ENCODE measurements at regions of chr2 and their contacts with region 1.

Region 1: GRCh38 chr2:190880378-190881073 is at the start of gene GLS:
- DNase-seq: peak; percentile 98
- H3K4me3 Mint-ChIP-seq: peak within 1 kb of the TSS; percentile 96
- H3K27ac Mint-ChIP-seq: peak within 1 kb of the TSS; percentile 99
- H3K4me1 Mint-ChIP-seq: peaks cover 42% of the 10 kb centered on the region
- H3K27me3 Mint-ChIP-seq: no peaks in the 10 kb centered on the region
- total RNA-seq, gene GLS: 248 to 255 TPM

Region 2: GRCh38 chr2:190319555-190320498 is 560.7 kb before region 1 on chr2 and contains the start of gene HIBCH:
- CTCF ChIA-PET with region 1: no interaction called
- intact Hi-C with region 1: loop called (anchors 2 kb)
- DNase-seq: peak; percentile 94
- H3K4me3 Mint-ChIP-seq: peak within 1 kb of the TSS; percentile 91
- H3K27ac Mint-ChIP-seq: peak within 1 kb of the TSS; percentile 88
- H3K4me1 Mint-ChIP-seq: peaks cover 39% of the 10 kb centered on the region
- H3K27me3 Mint-ChIP-seq: no peaks in the 10 kb centered on the region
- total RNA-seq, gene HIBCH: 19.2 TPM

Region 3: GRCh38 chr2:190655113-190655512 is 225.4 kb before region 1 on chr2:
- CTCF ChIA-PET with region 1: no interaction called
- intact Hi-C with region 1: no loop called
- DNase-seq: no peak
- H3K4me3 Mint-ChIP-seq: no peak overlapping the region
- H3K27ac Mint-ChIP-seq: no peak overlapping the region
- H3K4me1 Mint-ChIP-seq: peaks cover 52% of the 10 kb centered on the region
- H3K27me3 Mint-ChIP-seq: no peaks in the 10 kb centered on the region

Region 4: GRCh38 chr2:190679813-190680591 is 200.5 kb before region 1 on chr2:
- CTCF ChIA-PET with region 1: no interaction called
- intact Hi-C with region 1: loop called (anchors 1 kb)
- DNase-seq: peak; percentile 75
- H3K4me3 Mint-ChIP-seq: peak overlapping the region; percentile 13
- H3K27ac Mint-ChIP-seq: peak overlapping the region; percentile 81
- H3K4me1 Mint-ChIP-seq: peaks cover 52% of the 10 kb centered on the region
- H3K27me3 Mint-ChIP-seq: no peaks in the 10 kb centered on the region

Region 5: DNA sequence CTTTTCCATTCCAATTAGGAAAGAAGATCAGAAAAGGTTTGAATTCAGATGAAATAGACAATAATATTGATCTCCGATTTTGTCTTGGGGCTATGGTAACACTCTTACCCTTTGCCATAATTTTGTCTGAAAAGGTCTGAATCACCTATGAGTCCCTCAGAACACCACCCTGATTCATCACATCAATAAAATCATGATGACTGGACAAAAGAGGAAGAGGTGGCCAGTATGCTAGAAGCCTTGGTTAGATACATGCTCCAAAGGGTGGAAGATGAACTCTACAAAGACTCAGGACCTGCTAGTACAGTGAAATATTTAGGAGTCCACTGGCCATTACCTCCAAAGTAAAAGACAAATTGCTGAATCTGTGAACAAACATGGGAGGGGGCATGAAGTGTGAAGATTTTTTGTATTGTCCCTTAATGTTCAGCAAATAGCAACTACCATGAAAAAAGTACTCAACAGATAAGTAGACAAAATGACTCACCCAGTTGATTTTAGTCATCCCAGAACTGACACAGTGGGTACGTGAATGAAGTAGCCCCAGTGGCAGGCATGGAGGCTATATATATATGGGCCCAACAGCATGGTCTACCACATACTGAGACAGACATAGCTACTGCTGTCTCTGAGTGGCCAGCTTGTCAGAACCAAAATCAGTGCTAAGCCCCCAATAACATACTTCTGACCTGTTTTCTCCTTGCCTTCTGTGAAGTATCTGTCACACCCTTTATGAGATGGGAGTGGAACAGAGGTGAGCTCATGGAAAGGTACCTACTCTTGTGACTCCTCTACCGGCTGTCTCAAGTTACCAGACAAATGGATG is 36.4 kb before region 1 on chr2:
- CTCF ChIA-PET with region 1: no interaction called
- intact Hi-C with region 1: loop called (anchors 1 kb)
- DNase-seq: peak; percentile 76
- H3K4me3 Mint-ChIP-seq: peak overlapping the region; percentile 22
- H3K27ac Mint-ChIP-seq: peak overlapping the region; percentile 85
- H3K4me1 Mint-ChIP-seq: peaks cover 48% of the 10 kb centered on the region
- H3K27me3 Mint-ChIP-seq: no peaks in the 10 kb centered on the region

Region 6: DNA sequence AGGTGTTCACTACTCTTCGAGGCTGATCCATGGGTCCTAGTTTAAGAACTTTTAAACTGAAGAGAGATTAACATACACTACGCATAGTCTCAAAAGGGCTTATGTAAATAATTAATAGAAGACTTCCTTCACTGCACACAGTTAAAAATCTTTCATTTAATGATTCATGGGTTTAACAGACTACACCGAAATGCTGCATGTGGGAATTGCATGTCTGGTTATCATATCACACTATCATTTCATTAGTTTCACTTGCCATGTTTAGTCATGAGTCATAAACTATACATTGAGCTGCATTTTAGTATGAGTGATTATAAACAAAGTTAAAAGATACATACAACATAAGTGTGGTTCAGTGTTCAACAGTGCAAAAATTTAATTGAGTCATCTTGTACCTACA is 31.3 kb after region 1 on chr2:
- CTCF ChIA-PET with region 1: interaction called, 4 read pairs
- intact Hi-C with region 1: loop called (anchors 1 kb)
- DNase-seq: no peak
- H3K4me3 Mint-ChIP-seq: no peak overlapping the region
- H3K27ac Mint-ChIP-seq: peak overlapping the region; percentile 51
- H3K4me1 Mint-ChIP-seq: peaks cover 48% of the 10 kb centered on the region
- H3K27me3 Mint-ChIP-seq: no peaks in the 10 kb centered on the region

Region 7: GRCh38 chr2:191114403-191114886 is 233.9 kb after region 1 on chr2:
- CTCF ChIA-PET with region 1: no interaction called
- intact Hi-C with region 1: loop called (anchors 1 kb)
- DNase-seq: peak; percentile 74
- H3K4me3 Mint-ChIP-seq: peak overlapping the region; percentile 57
- H3K27ac Mint-ChIP-seq: peak overlapping the region; percentile 87
- H3K4me1 Mint-ChIP-seq: peaks cover 78% of the 10 kb centered on the region
- H3K27me3 Mint-ChIP-seq: no peaks in the 10 kb centered on the region

Region 8: GRCh38 chr2:191165176-191165643 is 284.7 kb after region 1 on chr2:
- CTCF ChIA-PET with region 1: no interaction called
- intact Hi-C with region 1: no loop called
- DNase-seq: peak; percentile 46
- H3K4me3 Mint-ChIP-seq: no peak overlapping the region
- H3K27ac Mint-ChIP-seq: peak overlapping the region; percentile 65
- H3K4me1 Mint-ChIP-seq: peaks cover 21% of the 10 kb centered on the region
- H3K27me3 Mint-ChIP-seq: peaks cover 2% of the 10 kb centered on the region

Region 9: GRCh38 chr2:191677646-191678436 is 797.3 kb after region 1 on chr2 and contains the start of gene NABP1:
- CTCF ChIA-PET with region 1: no interaction called
- intact Hi-C with region 1: loop called (anchors 1 kb)
- DNase-seq: peak; percentile 99
- H3K4me3 Mint-ChIP-seq: peak within 1 kb of the TSS; percentile 99
- H3K27ac Mint-ChIP-seq: peak within 1 kb of the TSS; percentile 100
- H3K4me1 Mint-ChIP-seq: peaks cover 37% of the 10 kb centered on the region
- H3K27me3 Mint-ChIP-seq: no peaks in the 10 kb centered on the region
- total RNA-seq, gene NABP1: 97.5 to 101 TPM

Measured in activated naive CD4-positive, alpha-beta T cell treated with anti-CD3 and anti-CD28 coated beads for 36 hours (primary cell).